Activated T-helper 2 cell treated with anti-CD3 and anti-CD28 coated beads, Interferon-gamma antibody, Interleukin-2, Interleukin-4, amounts not matched to agents 10 μg/mL and 5 μg/mL and 100 μg/mL, durations not matched to agents 14 hours and 24 hours and 36 hours (primary cell): ENCODE measurements at regions of chr10 and their contacts with region 1.

Region 1: DNA sequence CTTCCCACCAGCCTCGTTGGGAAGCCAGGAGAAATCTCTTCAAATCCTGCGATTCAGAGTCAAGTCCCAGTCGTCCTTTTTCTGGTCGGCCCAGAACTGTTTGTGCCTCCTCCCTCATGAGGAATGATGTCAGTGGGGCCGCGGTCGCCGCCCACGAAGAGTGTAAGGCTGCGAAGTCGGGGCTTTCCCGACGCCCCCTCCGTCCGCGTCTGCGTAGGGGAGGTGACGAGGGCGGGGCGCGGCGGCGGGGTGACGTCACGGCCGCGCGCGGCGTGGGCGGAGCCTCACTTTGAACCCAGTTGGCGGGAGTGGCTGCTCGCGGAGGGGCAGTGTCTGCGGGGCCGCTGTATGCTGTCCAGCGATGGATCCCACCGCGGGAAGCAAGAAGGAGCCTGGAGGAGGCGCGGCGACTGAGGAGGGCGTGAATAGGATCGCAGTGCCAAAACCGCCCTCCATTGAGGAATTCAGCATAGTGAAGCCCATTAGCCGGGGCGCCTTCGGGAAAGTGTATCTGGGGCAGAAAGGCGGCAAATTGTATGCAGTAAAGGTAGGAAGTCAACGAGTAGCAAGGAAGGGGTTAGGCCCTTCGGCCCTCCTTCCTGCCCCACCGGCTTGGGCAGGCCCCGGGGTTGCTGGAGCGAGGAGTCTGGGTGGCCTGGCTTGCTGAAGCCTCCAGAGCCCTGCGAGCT is at the start of gene MASTL:
- DNase-seq: peak; percentile 93
- H3K4me3 Mint-ChIP-seq: peak within 1 kb of the TSS; percentile 99
- H3K27ac Mint-ChIP-seq: peak within 1 kb of the TSS; percentile 100
- H3K4me1 Mint-ChIP-seq: peaks cover 31% of the 10 kb centered on the region
- H3K27me3 Mint-ChIP-seq: no peaks in the 10 kb centered on the region
- total RNA-seq, gene MASTL: 26.7 and 29.7 TPM in 2 replicates

Region 2: DNA sequence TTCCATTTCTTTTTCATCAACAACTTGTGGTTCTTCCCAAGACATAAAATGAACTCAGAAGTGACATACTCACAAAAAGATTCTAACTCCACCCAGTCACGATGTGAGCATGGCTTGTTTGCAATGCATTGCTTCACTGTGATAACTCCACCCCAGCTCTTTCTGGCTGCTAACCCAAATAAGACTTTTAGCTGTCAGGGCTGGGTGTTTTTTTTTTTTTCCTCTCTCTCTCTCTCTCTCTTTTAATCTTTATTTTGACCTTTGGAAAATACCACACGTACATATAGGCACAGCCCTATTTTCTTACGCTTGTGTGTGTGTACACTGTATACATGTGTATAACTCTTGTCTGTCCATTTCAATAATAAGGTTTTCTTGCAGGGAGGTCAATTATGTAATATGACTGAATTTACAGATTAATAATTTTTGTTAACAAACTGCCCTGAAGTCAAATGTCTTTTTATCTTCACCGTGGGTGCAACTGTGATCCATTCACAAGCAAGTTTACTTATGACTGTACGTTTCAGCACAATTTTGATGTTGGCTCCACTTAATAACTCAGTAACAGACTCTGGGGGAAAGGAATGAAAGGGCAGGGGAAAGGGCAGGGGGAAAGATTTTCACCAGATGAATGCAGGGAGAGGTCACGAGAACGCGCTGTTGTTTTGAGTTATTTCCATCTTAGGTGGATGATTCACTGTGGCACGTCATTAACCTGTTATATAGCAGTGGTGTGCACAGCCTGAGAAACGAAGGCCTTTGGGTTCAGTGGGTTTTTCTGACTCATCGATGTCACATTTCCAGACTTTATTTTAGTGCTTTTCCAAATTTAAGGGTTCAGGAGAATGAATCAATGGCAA is 668.0 kb before region 1 on chr10:
- intact Hi-C with region 1: loop called (anchors 10 kb)
- DNase-seq: peak; percentile 65
- H3K4me3 Mint-ChIP-seq: peak overlapping the region; percentile 76
- H3K27ac Mint-ChIP-seq: peak overlapping the region; percentile 98
- H3K4me1 Mint-ChIP-seq: peaks cover 52% of the 10 kb centered on the region
- H3K27me3 Mint-ChIP-seq: no peaks in the 10 kb centered on the region

Region 3: GRCh38 chr10:26737730-26738129 is 417.5 kb before region 1 on chr10:
- intact Hi-C with region 1: loop called (anchors 5 kb)
- DNase-seq: peak; percentile 26
- H3K4me3 Mint-ChIP-seq: no peak overlapping the region
- H3K27ac Mint-ChIP-seq: peak overlapping the region; percentile 96
- H3K4me1 Mint-ChIP-seq: peaks cover 49% of the 10 kb centered on the region
- H3K27me3 Mint-ChIP-seq: no peaks in the 10 kb centered on the region

Region 4: DNA sequence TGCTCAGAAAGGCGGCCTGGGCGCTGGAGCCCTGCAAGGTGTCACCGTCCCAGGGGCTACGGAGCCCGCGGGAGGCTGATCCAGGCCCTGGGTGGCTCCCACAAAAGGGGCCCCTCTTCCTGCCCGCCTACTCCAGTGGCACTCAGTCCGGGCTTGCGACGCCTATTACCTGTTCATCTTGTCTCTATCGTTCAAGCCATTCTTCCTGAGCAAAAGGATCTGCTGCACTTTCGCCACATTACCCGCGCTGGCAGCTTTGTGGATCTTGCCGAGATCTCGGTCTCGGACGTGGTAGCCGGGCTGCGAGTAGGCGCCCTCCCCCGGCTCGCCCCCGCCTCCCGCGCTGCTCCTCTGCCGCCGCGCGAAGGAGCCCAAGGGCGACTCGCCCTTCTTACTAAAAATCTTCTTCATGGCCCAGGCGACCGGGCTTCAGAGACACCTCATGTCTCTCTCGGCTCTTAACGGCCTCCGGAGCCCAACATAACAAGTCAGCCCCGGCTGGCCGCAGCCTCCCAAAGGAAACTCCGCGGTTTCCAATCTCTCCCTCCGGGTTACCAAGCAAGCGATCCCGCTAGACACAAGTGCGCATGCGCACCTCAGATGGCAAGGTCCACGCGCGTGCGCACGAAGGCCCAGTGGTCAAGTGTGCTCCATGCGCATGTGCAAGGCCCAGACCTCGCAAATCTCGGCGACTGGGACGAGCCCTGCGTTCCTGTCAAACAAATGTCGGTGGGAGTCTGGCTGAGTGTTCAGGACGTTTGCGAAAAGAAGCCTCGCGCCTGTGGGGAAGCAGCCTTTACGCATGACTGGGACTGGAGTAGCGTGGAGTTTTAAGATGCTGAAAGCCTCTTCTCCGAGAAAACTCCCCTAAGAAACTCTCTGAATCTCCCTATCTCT is 55.0 kb before region 1 on chr10 and contains the start of gene ANKRD26:
- intact Hi-C with region 1: loop called (anchors 1 kb)
- DNase-seq: peak; percentile 95
- H3K4me3 Mint-ChIP-seq: peak within 1 kb of the TSS; percentile 85
- H3K27ac Mint-ChIP-seq: peak within 1 kb of the TSS; percentile 91
- H3K4me1 Mint-ChIP-seq: peaks cover 34% of the 10 kb centered on the region
- H3K27me3 Mint-ChIP-seq: peaks cover 2% of the 10 kb centered on the region
- total RNA-seq, gene ANKRD26: 5.5 and 6.5 TPM in 2 replicates

Region 5: DNA sequence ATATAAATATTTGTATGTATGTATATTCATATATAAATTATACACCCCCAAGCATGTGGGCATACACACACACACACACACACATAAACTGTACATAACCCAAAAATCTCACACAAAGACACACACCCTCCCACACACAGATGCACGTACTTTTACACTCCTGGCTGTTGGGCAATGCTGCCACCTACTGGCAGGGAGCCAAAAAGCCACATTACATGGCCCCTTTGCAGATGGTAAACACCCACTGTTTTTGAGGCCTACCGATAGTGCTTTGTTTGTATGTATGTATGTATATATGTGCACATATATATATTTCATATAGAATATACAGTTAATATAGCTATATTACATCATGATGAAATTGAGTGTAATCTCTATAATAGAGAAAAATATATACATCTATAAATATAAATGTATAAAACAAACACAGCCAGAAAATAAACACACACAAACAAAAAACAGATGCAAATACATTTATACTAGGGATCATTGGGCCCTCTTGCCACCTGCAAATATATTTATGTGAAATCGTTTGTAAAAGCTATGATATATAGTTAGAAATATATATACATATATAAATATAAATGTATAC is 205.5 kb after region 1 on chr10:
- intact Hi-C with region 1: loop called (anchors 5 kb)
- DNase-seq: peak; percentile 70
- H3K4me3 Mint-ChIP-seq: no peak overlapping the region
- H3K27ac Mint-ChIP-seq: no peak overlapping the region
- H3K4me1 Mint-ChIP-seq: peaks cover 3% of the 10 kb centered on the region
- H3K27me3 Mint-ChIP-seq: peaks cover 2% of the 10 kb centered on the region

Region 6: GRCh38 chr10:28532383-28533175 is 1377.4 kb after region 1 on chr10 and contains the start of gene WAC:
- intact Hi-C with region 1: loop called (anchors 2 kb)
- DNase-seq: peak; percentile 95
- H3K4me3 Mint-ChIP-seq: peak within 1 kb of the TSS; percentile 99
- H3K27ac Mint-ChIP-seq: peak within 1 kb of the TSS; percentile 100
- H3K4me1 Mint-ChIP-seq: peaks cover 42% of the 10 kb centered on the region
- H3K27me3 Mint-ChIP-seq: no peaks in the 10 kb centered on the region
- total RNA-seq, gene WAC: 126 and 130 TPM in 2 replicates